ENCODE measurements at regions of chr18 and their contacts with region 1.

Region 1: GRCh38 chr18:3447895-3448837 is 1.8 kb upstream of the TGIF1 start:
- DNase-seq: peak; percentile 99
- H3K4me3 ChIP-seq: peak overlapping the region; percentile 56 to 75 (median 67)
- H3K27ac ChIP-seq: peak overlapping the region; percentile 99
- H3K4me1 ChIP-seq: peaks cover 17% of the 10 kb centered on the region
- H3K27me3 ChIP-seq: no peaks in the 10 kb centered on the region
- CTCF ChIP-seq: peak in 1 of 2 donors; percentile 41

Region 2: GRCh38 chr18:3297025-3297984 is 150.9 kb before region 1 on chr18:
- CTCF ChIA-PET with region 1: interaction called, 20 read pairs
- dilution Hi-C with region 1: loop called (anchors 10 kb)
- in situ Hi-C with region 1: loop called in 1 of 2 experiments (anchors 10 kb)
- intact Hi-C with region 1: loop called (anchors 1 kb)
- DNase-seq: peak; percentile 93
- H3K4me3 ChIP-seq: peak overlapping the region; percentile 68 to 79 (median 68)
- H3K27ac ChIP-seq: peak overlapping the region; percentile 72
- H3K4me1 ChIP-seq: peaks cover 7% of the 10 kb centered on the region
- H3K27me3 ChIP-seq: no peaks in the 10 kb centered on the region
- CTCF ChIP-seq: peak; percentile 69 to 84

Region 3: GRCh38 chr18:3350566-3351527 is 97.3 kb before region 1 on chr18:
- CTCF ChIA-PET with region 1: no interaction called
- dilution Hi-C with region 1: no loop called
- in situ Hi-C with region 1: no loop called
- intact Hi-C with region 1: loop called (anchors 1 kb)
- DNase-seq: peak; percentile 98
- H3K4me3 ChIP-seq: no peak overlapping the region
- H3K27ac ChIP-seq: peak overlapping the region; percentile 94
- H3K4me1 ChIP-seq: peaks cover 29% of the 10 kb centered on the region
- H3K27me3 ChIP-seq: no peaks in the 10 kb centered on the region
- CTCF ChIP-seq: no peak

Region 4: DNA sequence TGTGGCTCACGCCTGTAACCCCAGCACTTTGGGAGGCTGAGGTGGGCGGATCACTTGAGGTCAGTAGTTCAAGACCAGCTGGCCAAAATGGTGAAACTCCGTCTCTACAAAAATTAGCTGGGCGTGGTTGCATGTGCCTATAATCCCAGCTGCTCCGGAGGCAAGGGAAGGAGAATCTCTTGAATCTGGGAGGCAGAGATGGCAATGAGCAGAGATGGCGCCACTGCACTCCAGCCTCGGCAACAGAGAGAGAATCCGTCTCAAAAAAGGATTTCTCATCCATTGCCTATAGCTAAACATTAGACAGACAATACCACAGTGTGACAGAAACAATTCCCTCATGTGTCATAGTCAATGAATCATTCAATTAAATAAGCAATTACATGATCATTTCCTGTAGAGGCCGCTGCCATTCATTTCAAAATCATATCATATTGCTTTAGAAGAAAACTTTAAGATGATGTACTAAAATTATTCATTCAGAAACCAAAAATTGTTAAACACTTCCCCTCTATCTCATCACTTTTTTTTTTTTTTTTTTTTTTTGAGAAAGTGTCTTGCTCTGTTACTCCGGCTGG is 67.7 kb before region 1 on chr18:
- CTCF ChIA-PET with region 1: interaction called, 10 read pairs
- dilution Hi-C with region 1: loop called (anchors 5 kb)
- in situ Hi-C with region 1: loop called in 1 of 2 experiments (anchors 10 kb)
- intact Hi-C with region 1: loop called (anchors 2 kb)
- DNase-seq: peak; percentile 82
- H3K4me3 ChIP-seq: no peak overlapping the region
- H3K27ac ChIP-seq: peak overlapping the region; percentile 51
- H3K4me1 ChIP-seq: peaks cover 11% of the 10 kb centered on the region
- H3K27me3 ChIP-seq: no peaks in the 10 kb centered on the region
- CTCF ChIP-seq: peak; percentile 36 to 42

Region 5: GRCh38 chr18:3402982-3403451 is 45.1 kb before region 1 on chr18:
- CTCF ChIA-PET with region 1: no interaction called
- dilution Hi-C with region 1: no loop called
- in situ Hi-C with region 1: no loop called
- intact Hi-C with region 1: no loop called
- DNase-seq: peak; percentile 42
- H3K4me3 ChIP-seq: no peak overlapping the region
- H3K27ac ChIP-seq: no peak overlapping the region
- H3K4me1 ChIP-seq: no peaks in the 10 kb centered on the region
- H3K27me3 ChIP-seq: no peaks in the 10 kb centered on the region
- CTCF ChIP-seq: no peak

Region 6: DNA sequence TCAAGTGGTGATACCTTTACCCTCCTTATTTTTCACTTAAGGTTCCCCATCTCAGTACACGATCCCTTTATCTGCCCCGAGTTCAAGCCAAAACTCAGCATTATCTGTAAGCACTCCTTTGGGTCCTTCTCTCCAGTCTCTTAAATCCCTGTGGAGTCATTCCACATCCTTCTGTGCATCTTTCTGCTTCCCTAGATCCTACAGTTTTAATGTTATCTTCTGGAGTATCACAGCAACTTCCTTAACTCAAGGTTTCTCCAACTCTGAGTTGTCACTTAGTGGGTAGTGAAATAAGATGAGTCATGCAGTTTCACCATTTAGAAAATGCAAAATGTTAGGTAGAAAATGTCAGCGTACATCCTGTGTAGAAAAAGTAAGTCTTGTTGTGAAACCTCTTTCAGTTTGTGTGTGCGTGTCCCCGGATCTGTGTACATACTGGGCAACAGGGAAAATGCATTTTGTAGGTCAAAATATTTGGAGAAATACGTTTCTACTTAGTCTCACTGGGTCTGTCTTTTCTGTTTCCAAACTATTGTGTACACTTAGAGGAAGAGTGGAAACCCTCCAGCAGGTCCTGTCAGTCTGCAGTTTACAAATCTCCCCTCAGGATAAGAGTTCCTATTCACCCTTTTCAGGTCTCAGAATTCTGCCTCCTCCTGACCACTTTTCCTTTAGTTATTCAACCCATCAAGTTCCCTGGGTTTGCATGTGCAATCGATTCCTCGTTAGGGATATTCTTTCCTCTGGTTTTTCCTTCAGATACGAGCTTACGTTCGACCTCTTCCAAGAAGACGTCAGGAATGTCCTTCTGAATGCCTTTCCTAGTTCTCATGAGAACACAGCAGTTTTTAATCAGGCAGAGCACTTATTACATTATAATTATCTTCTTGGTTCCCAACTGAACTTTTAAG is 156.6 kb after region 1 on chr18:
- CTCF ChIA-PET with region 1: no interaction called
- dilution Hi-C with region 1: no loop called
- in situ Hi-C with region 1: loop called in 1 of 2 experiments (anchors 5 kb)
- intact Hi-C with region 1: loop called (anchors 1 kb)
- DNase-seq: peak; percentile 91
- H3K4me3 ChIP-seq: peak overlapping the region; percentile 25 to 53 (median 42)
- H3K27ac ChIP-seq: peak overlapping the region; percentile 99
- H3K4me1 ChIP-seq: peaks cover 35% of the 10 kb centered on the region
- H3K27me3 ChIP-seq: no peaks in the 10 kb centered on the region
- CTCF ChIP-seq: no peak

Region 7: GRCh38 chr18:3665780-3666525 is 217.8 kb after region 1 on chr18:
- CTCF ChIA-PET with region 1: no interaction called
- dilution Hi-C with region 1: loop called (anchors 5 kb)
- in situ Hi-C with region 1: loop called in 1 of 2 experiments (anchors 5 kb)
- intact Hi-C with region 1: loop called (anchors 1 kb)
- DNase-seq: peak; percentile 81
- H3K4me3 ChIP-seq: peak overlapping the region; percentile 8 to 33 (median 8)
- H3K27ac ChIP-seq: peak overlapping the region; percentile 74
- H3K4me1 ChIP-seq: peaks cover 26% of the 10 kb centered on the region
- H3K27me3 ChIP-seq: no peaks in the 10 kb centered on the region
- CTCF ChIP-seq: peak; percentile 90 to 96

Region 8: GRCh38 chr18:3983351-3983969 is 535.3 kb after region 1 on chr18:
- CTCF ChIA-PET with region 1: no interaction called
- dilution Hi-C with region 1: no loop called
- in situ Hi-C with region 1: no loop called
- intact Hi-C with region 1: loop called (anchors 5 kb)
- DNase-seq: peak; percentile 97
- H3K4me3 ChIP-seq: no peak overlapping the region
- H3K27ac ChIP-seq: peak overlapping the region; percentile 98
- H3K4me1 ChIP-seq: peaks cover 38% of the 10 kb centered on the region
- H3K27me3 ChIP-seq: no peaks in the 10 kb centered on the region
- CTCF ChIP-seq: no peak